Prostate gland (tissue), 2 donors: ENCODE measurements at regions of chr6 and their contacts with region 1.

Region 1: GRCh38 chr6:150813319-150813992 is 52.0 kb upstream of the MTHFD1L start:
- DNase-seq: no peak
- H3K4me3 ChIP-seq: no peak overlapping the region
- H3K27ac ChIP-seq: no peak overlapping the region
- H3K4me1 ChIP-seq: no peaks in the 10 kb centered on the region
- H3K27me3 ChIP-seq: no peaks in the 10 kb centered on the region
- CTCF ChIP-seq: no peak
- POLR2A ChIP-seq: no peak

Region 2: GRCh38 chr6:150072201-150072600 is 741.3 kb before region 1 on chr6:
- intact Hi-C with region 1: loop called (anchors 10 kb)
- DNase-seq: peak; percentile 56
- H3K4me3 ChIP-seq: no peak overlapping the region
- H3K27ac ChIP-seq: no peak overlapping the region
- H3K4me1 ChIP-seq: no peaks in the 10 kb centered on the region
- H3K27me3 ChIP-seq: no peaks in the 10 kb centered on the region
- CTCF ChIP-seq: no peak
- POLR2A ChIP-seq: no peak

Region 3: GRCh38 chr6:150600301-150601017 is 213.0 kb before region 1 on chr6:
- intact Hi-C with region 1: loop called (anchors 5 kb)
- DNase-seq: peak; percentile 57
- H3K4me3 ChIP-seq: peak overlapping the region; percentile 50 to 51
- H3K27ac ChIP-seq: peak overlapping the region; percentile 35 to 65
- H3K4me1 ChIP-seq: no peaks in the 10 kb centered on the region
- H3K27me3 ChIP-seq: no peaks in the 10 kb centered on the region
- CTCF ChIP-seq: peak in 2 of 4 experiments; percentile 47 to 66
- POLR2A ChIP-seq: no peak